ENCODE measurements at regions of chr17 and their contacts with region 1.

Region 1: DNA sequence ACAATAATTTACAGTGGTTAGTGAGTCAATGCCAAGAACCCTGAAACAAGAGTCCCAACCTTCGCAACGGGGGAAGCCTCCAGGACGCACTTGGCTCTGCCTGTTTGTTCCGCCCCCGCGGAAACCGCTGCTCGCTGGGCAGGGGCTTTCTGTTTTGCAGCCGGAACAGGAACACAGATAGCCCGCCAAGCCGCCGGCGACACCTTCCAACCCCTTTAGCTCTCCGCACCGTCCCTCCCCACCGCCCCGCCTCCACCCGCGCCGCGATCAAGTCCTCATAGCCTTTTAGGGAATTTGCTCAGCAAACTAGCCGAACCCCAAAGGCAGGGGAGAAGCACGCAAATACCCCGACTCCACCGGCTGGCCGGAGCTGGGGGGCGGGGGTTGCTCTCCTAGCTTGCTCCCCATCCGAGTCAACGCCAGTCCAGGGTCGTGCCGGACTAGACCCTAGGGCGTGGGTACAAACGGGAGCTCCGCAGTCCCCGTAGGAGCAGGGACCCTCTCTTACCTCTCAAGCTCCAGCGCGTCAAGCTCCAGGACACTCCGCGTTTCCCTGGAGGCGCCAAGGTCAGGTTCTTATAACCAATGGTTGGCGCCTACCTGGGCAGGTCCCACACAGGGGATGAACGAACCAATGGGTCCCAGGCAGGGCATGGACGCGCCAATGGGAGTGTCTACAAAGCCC is at the start of gene SLFN13:
- DNase-seq: peak; percentile 49 to 84 (median 75)
- ATAC-seq: peak; percentile 93 to 97 (median 94)
- H3K4me3 ChIP-seq: peak within 1 kb of the TSS; percentile 13 to 58 (median 31)
- H3K27ac ChIP-seq: peak within 1 kb of the TSS in 2 of 4 donors; percentile 34 to 57
- H3K4me1 ChIP-seq: peaks cover 0 to 4% (median 0%) of the 10 kb centered on the region in 3 donors
- H3K27me3 ChIP-seq: peaks cover 0 to 9% (median 0%) of the 10 kb centered on the region in 4 donors
- CTCF ChIP-seq: no peak
- total RNA-seq, gene SLFN13: 1.3 to 8.5 (median 3.3) TPM

Region 2: DNA sequence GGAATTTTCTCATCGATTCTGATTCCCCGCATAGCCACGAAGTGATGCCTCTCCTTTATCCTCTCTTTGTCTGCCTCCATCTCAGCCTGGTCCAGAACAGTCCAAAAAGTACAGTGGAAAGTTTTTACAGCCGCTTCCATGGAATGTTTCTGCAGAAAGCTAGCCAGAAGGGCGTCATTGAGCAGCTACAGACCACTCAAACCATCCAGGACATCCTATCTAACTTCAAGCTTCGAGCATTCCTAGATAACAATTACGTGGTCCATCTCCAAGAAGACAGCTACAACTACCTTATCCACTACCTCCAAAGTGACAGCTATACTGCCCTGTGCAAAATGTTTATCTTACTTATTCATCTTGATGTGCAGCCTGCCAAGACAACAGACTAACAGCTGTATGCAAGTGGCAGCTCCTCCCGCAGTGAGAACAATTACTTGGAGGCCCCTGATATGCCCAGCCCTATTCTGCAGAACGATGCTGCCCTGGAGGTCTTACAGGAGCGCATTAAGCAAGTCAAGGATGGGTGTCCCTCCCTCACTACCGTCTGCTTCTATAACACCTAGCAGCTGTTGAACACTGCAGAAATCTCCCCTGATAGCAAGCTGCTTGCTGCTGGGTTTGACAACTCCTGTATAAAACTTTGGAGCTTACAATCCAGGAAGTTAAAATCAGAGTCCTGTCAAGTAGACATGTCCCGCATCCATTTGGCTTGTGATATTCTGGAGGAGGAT is 50.3 kb after region 1 on chr17:
- intact Hi-C with region 1: loop called in 1 of 3 experiments (anchors 10 kb)
- DNase-seq: no peak
- ATAC-seq: no peak
- H3K4me3 ChIP-seq: no peak overlapping the region
- H3K27ac ChIP-seq: no peak overlapping the region
- H3K4me1 ChIP-seq: no peaks in the 10 kb centered on the region
- H3K27me3 ChIP-seq: peaks cover 1 to 41% (median 13%) of the 10 kb centered on the region in 4 donors
- CTCF ChIP-seq: no peak

Region 3: GRCh38 chr17:35521150-35521549 is 72.8 kb after region 1 on chr17:
- intact Hi-C with region 1: no loop called
- DNase-seq: no peak
- ATAC-seq: no peak
- H3K4me3 ChIP-seq: no peak overlapping the region
- H3K27ac ChIP-seq: no peak overlapping the region
- H3K4me1 ChIP-seq: no peaks in the 10 kb centered on the region
- H3K27me3 ChIP-seq: peaks cover 0 to 16% (median 2%) of the 10 kb centered on the region in 4 donors
- CTCF ChIP-seq: no peak

Measured in pancreas (tissue), 10 donors.